A549 (cell line): ENCODE measurements at regions of chr1 and their contacts with region 1.

Region 1: GRCh38 chr1:162612606-162613400 is 19.5 kb upstream of the DDR2 start:
- DNase-seq: no peak
- ATAC-seq: no peak; a peak in 1 of 6 replicates
- H3K4me3 ChIP-seq: no peak overlapping the region
- H3K27ac ChIP-seq: no peak overlapping the region
- H3K4me1 ChIP-seq: no peaks in the 10 kb centered on the region
- CTCF ChIP-seq: no peak
- EP300 ChIP-seq: no peak
- POLR2A ChIP-seq: no peak
- RAD21 ChIP-seq: no peak

Region 2: DNA sequence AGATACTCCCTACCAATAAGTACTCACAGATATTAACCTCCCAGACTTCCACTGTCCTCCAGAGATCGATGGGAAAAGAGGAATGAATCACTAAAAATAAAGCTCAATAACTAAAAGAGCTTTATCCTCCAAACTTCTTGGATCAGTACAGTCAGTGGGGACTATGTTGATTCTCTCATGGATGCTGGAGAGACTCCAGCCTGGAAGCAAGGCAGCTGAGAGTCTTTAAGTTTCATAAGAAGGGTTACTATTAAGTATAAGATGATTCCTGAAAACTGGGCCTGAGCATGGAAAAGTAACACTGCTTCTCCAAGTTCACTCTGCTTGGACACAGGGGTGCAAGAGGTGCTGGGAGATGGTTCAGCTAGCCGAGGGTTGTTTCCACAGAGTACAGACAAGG is 13.3 kb after region 1 on chr1:
- CTCF ChIA-PET with region 1: interaction called, 23 read pairs
- POLR2A ChIA-PET with region 1: no interaction called
- DNase-seq: no peak
- ATAC-seq: no peak
- H3K4me3 ChIP-seq: no peak overlapping the region
- H3K27ac ChIP-seq: no peak overlapping the region
- H3K4me1 ChIP-seq: no peaks in the 10 kb centered on the region
- CTCF ChIP-seq: no peak
- EP300 ChIP-seq: no peak
- POLR2A ChIP-seq: no peak
- RAD21 ChIP-seq: no peak

Region 3: DNA sequence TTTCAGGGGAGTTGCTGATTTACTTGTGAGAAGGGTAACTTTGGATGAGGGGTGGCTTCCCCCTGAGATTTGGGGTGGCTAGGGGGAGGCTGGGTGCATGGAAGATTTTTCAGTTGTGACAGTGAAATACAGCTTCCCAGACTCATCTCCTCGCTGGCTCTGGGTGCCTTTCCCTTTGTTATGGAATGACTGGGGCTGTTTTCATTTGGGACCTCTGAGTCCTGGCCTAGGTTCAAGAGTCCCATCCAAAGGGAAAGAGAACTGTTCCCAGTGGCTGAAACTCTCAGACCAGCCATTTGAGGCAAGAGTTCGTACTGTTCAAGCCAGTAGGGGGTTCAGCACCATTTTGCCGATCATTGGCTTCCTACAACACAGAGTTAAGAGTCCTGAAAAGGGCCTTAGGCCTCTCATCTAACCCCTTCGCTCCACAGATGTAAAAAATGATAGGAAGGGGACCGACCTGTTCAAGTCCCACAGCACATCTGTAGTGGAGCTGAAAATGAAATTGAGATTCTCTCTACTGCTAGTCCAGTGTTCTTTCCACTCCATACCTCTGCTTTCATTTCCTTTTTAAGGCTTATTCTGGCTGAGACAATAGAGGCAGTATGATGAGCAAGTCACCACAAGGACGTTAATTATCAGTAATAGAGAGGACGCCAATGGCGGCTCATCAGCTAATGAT is 20.4 kb after region 1 on chr1:
- CTCF ChIA-PET with region 1: interaction called, 23 read pairs
- POLR2A ChIA-PET with region 1: no interaction called
- DNase-seq: no peak
- ATAC-seq: no peak
- H3K4me3 ChIP-seq: no peak overlapping the region
- H3K27ac ChIP-seq: no peak overlapping the region
- H3K4me1 ChIP-seq: no peaks in the 10 kb centered on the region
- CTCF ChIP-seq: no peak
- EP300 ChIP-seq: no peak
- POLR2A ChIP-seq: no peak
- RAD21 ChIP-seq: no peak